ENCODE measurements at regions of chr17 and their contacts with region 1.

Region 1: GRCh38 chr17:55238179-55238930 is 26.4 kb upstream of the HLF start:
- DNase-seq: peak; percentile 99

Region 2: GRCh38 chr17:55265311-55266021 is 27.1 kb after region 1 on chr17:
- CTCF ChIA-PET with region 1: interaction called, 3 read pairs
- POLR2A ChIA-PET with region 1: interaction called, 16 read pairs
- DNase-seq: no peak